PC-9 (cell line): ENCODE measurements at regions of chr2 and their contacts with region 1.

Region 1: GRCh38 chr2:42944779-42945415 is 152.5 kb upstream of the HAAO start:
- DNase-seq: no peak
- H3K4me3 ChIP-seq: no peak overlapping the region
- H3K27ac ChIP-seq: no peak overlapping the region
- H3K4me1 ChIP-seq: peaks cover 3% of the 10 kb centered on the region; the same call in 1 of the 2 replicates
- H3K27me3 ChIP-seq: no peaks in the 10 kb centered on the region
- CTCF ChIP-seq: no peak

Region 2: GRCh38 chr2:42859006-42859552 is 85.8 kb before region 1 on chr2:
- CTCF ChIA-PET with region 1: interaction called, 4 read pairs
- POLR2A ChIA-PET with region 1: no interaction called
- intact Hi-C with region 1: loop called (anchors 2 kb)
- DNase-seq: peak; percentile 64 to 65
- H3K4me3 ChIP-seq: no peak overlapping the region
- H3K27ac ChIP-seq: no peak overlapping the region
- H3K4me1 ChIP-seq: no peaks in the 10 kb centered on the region
- H3K27me3 ChIP-seq: no peaks in the 10 kb centered on the region
- CTCF ChIP-seq: peak; percentile 99

Region 3: DNA sequence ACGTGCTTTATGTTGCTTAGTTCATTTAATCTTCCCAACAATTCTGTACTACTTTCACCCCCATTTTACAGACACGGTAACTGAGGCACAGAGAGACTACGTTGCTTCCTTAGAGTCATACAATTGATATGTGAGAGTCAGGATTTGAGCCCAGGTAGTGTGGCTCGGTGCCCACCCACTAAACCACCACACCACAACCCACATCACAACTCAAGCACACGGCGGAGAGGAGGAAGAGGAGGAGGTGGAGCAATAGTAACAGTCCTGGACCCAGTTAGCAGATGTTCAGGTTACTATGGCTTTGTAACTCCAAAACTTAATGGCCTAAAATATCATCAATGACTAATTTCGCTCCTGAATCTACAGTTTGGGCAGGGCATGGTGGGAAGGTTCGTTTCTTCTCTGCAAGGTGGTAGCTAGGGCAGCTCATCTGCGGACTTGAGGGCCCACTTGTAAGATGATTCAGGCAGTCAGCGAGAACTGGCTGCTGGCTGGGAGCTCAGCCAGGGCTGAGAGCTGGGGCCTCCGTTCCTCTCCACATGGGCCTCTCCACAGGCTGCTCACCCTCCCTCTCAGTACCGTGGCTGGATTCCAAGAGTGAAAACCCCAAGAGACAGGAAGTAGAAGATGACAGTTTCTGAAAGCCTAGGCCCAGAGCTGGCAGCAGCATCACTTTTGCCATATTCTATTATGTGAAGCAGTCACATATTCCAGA is 114.4 kb after region 1 on chr2:
- CTCF ChIA-PET with region 1: no interaction called
- POLR2A ChIA-PET with region 1: no interaction called
- intact Hi-C with region 1: no loop called
- DNase-seq: peak in 1 of 2 experiments; percentile 51
- H3K4me3 ChIP-seq: no peak overlapping the region
- H3K27ac ChIP-seq: no peak overlapping the region
- H3K4me1 ChIP-seq: peaks cover 23% of the 10 kb centered on the region
- H3K27me3 ChIP-seq: no peaks in the 10 kb centered on the region
- CTCF ChIP-seq: no peak

Region 4: GRCh38 chr2:43542285-43542937 is 597.5 kb after region 1 on chr2:
- CTCF ChIA-PET with region 1: no interaction called
- POLR2A ChIA-PET with region 1: no interaction called
- intact Hi-C with region 1: loop called (anchors 1 kb)
- DNase-seq: peak in 1 of 2 experiments; percentile 56
- H3K4me3 ChIP-seq: no peak overlapping the region
- H3K27ac ChIP-seq: no peak overlapping the region
- H3K4me1 ChIP-seq: no peaks in the 10 kb centered on the region
- H3K27me3 ChIP-seq: no peaks in the 10 kb centered on the region
- CTCF ChIP-seq: peak; percentile 91

Region 5: GRCh38 chr2:43611987-43612894 is 667.3 kb after region 1 on chr2:
- CTCF ChIA-PET with region 1: no interaction called
- POLR2A ChIA-PET with region 1: no interaction called
- intact Hi-C with region 1: loop called (anchors 2 kb)
- DNase-seq: peak; percentile 77 to 79
- H3K4me3 ChIP-seq: no peak overlapping the region
- H3K27ac ChIP-seq: no peak overlapping the region
- H3K4me1 ChIP-seq: 0 out of 2 replicates have a peak, but pooled peaks cover 3% of the 10 kb centered on the region
- H3K27me3 ChIP-seq: no peaks in the 10 kb centered on the region
- CTCF ChIP-seq: peak; percentile 96